ENCODE measurements at regions of chr3 and their contacts with region 1.

Region 1: GRCh38 chr3:124928333-124929202 is 6.0 kb downstream of the MUC13 start:
- DNase-seq: peak; percentile 57
- ATAC-seq: peak; percentile 63; the same call in 2 of the 3 replicates
- H3K4me3 ChIP-seq: no peak overlapping the region
- H3K27ac ChIP-seq: no peak overlapping the region
- H3K4me1 ChIP-seq: peaks cover 22% of the 10 kb centered on the region
- H3K27me3 ChIP-seq: no peaks in the 10 kb centered on the region
- CTCF ChIP-seq: peak; percentile 74
- EP300 ChIP-seq: no peak
- POLR2A ChIP-seq: no peak
- RAD21 ChIP-seq: 0 out of 2 replicates have a peak, but pooled peaks have one; percentile 40

Region 2: GRCh38 chr3:124916837-124917409 is 11.6 kb before region 1 on chr3:
- CTCF ChIA-PET with region 1: no interaction called
- POLR2A ChIA-PET with region 1: no interaction called
- in situ Hi-C with region 1: no loop called
- intact Hi-C with region 1: no loop called
- DNase-seq: no peak
- ATAC-seq: no peak
- H3K4me3 ChIP-seq: no peak overlapping the region
- H3K27ac ChIP-seq: no peak overlapping the region
- H3K4me1 ChIP-seq: peaks cover 9% of the 10 kb centered on the region
- H3K27me3 ChIP-seq: peaks cover 0 to 7% of the 10 kb centered on the region in 2 experiments; a peak in 1 of 5 replicates
- CTCF ChIP-seq: no peak
- EP300 ChIP-seq: no peak
- POLR2A ChIP-seq: no peak
- RAD21 ChIP-seq: no peak

Region 3: DNA sequence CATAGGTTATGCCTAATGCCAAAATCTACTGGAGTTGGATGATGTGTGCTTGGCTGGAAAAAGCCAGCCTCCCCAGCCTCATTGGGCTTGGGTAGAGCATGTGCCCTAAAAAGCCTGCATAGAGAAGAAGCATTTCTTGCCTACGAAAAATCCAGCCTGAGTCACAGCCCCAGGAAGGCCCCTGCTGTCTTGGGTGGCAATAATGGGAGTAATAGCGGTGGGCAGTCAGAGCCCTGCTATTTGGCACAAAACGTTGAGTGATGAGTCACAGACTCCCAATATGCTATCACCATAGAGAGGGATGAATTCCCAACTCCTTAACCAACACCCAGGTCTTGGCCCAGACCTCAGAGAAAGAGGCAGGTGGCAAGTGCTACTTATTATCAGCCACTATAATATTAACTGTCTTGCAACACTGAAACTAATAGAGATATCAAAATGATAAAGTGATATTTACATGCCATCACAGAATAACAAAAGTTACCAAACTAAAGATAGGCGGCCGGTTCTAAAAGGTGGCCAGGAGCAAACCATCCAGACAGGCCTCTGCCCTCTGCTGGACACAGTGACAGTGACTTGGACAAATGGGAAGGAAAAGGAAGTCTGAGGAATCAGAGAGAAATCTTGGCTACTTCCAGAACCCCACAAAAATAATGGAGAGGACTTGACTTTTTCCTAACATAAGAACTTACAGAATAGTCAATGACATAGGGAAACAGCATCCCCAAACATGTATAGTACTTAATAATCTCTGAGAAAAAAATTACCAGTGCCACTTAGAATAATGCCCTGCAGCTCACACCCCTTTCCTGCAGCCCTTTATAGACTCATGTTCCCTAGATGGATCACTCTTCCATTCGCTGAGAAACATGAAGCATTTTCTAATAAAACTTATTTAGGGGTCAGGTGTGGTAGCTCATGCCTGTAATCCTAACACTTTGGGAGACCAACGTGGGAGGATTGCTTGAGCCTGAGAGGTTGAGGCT is 57.9 kb after region 1 on chr3:
- CTCF ChIA-PET with region 1: interaction called, 9 read pairs
- POLR2A ChIA-PET with region 1: no interaction called
- in situ Hi-C with region 1: no loop called
- intact Hi-C with region 1: loop called (anchors 2 kb)
- DNase-seq: no peak
- ATAC-seq: peak; percentile 68
- H3K4me3 ChIP-seq: no peak overlapping the region
- H3K27ac ChIP-seq: no peak overlapping the region
- H3K4me1 ChIP-seq: peaks cover under 1% of the 10 kb centered on the region; the same call in 1 of the 2 replicates
- H3K27me3 ChIP-seq: no peaks in the 10 kb centered on the region
- CTCF ChIP-seq: peak; percentile 53
- EP300 ChIP-seq: no peak
- POLR2A ChIP-seq: no peak
- RAD21 ChIP-seq: peak; percentile 24; the same call in 1 of the 2 replicates

Region 4: GRCh38 chr3:125129512-125129962 is 201.0 kb after region 1 on chr3:
- CTCF ChIA-PET with region 1: no interaction called
- POLR2A ChIA-PET with region 1: no interaction called
- in situ Hi-C with region 1: no loop called
- intact Hi-C with region 1: no loop called
- DNase-seq: peak; percentile 59
- ATAC-seq: peak; percentile 66
- H3K4me3 ChIP-seq: no peak overlapping the region
- H3K27ac ChIP-seq: no peak overlapping the region
- H3K4me1 ChIP-seq: peaks cover 32% of the 10 kb centered on the region
- H3K27me3 ChIP-seq: peaks cover 2 to 10% of the 10 kb centered on the region in 2 experiments; a peak in 3 of 5 replicates
- CTCF ChIP-seq: no peak
- EP300 ChIP-seq: no peak
- POLR2A ChIP-seq: no peak
- RAD21 ChIP-seq: no peak

Region 5: DNA sequence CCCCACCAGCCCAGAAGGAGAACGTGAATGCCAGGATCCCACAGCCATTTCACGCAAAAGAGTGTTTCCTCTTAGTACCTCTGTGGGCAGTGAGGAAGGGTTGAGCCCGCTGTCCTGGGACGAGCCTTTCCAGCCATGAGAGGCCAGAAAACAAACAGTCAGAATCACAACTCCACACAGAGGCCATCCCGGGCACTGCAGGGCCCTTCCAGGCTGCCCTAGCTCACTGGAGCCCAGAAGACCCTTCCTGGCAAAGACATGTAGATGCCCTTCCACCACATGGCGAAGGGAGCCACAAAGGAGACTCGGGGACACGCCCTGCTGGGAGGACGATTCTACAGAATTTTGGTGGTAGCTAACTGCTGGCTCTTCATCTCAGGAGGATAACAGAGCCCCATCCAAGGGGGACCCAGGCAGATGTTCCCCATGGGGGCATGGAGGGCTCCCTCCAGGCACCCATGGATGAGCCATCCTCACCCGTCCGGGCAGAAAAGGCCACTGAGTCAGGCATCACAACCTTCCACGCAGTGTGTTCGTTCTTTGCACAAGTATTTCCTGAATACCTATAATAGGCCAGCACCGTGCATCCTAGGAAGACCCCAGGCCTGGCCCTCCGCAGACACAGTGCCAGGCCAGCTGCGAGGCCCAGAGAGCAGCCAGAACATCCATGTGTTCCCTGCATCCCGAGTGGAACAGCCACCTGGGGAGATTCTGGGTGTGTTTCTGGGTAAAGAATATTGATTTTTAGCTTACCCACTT is 236.8 kb after region 1 on chr3:
- CTCF ChIA-PET with region 1: interaction called, 9 read pairs
- POLR2A ChIA-PET with region 1: no interaction called
- in situ Hi-C with region 1: loop called (anchors 5 kb)
- intact Hi-C with region 1: loop called (anchors 2 kb)
- DNase-seq: peak; percentile 34
- ATAC-seq: peak; percentile 94
- H3K4me3 ChIP-seq: no peak overlapping the region
- H3K27ac ChIP-seq: no peak overlapping the region
- H3K4me1 ChIP-seq: no peaks in the 10 kb centered on the region
- H3K27me3 ChIP-seq: peaks cover 0 to 13% of the 10 kb centered on the region in 2 experiments; a peak in 2 of 5 replicates
- CTCF ChIP-seq: peak; percentile 77
- EP300 ChIP-seq: no peak
- POLR2A ChIP-seq: no peak
- RAD21 ChIP-seq: peak; percentile 64; the same call in 1 of the 2 replicates

Region 6: DNA sequence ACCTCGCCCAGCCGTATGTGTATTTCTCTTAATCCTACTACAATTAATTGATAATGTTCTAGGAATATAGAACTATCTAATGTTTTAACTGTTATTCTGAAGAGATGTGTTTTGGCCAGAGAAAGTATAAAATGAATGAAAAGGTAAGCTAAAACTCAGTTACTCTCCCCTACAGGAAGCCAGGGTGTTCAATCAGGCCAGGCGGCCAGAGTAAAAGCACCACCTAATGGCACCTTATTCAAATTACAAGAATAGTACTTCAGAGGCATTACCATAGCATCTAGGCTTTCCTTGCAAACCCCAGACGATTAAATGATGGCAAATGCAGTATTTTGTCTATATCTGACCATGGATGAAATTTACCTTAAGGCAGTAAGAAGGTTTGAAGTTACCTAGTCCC is 273.6 kb after region 1 on chr3:
- CTCF ChIA-PET with region 1: interaction called, 6 read pairs
- POLR2A ChIA-PET with region 1: no interaction called
- in situ Hi-C with region 1: no loop called
- intact Hi-C with region 1: loop called (anchors 5 kb)
- DNase-seq: no peak
- ATAC-seq: peak; percentile 84
- H3K4me3 ChIP-seq: no peak overlapping the region
- H3K27ac ChIP-seq: no peak overlapping the region
- H3K4me1 ChIP-seq: peaks cover 22% of the 10 kb centered on the region
- H3K27me3 ChIP-seq: no peaks in the 10 kb centered on the region
- CTCF ChIP-seq: peak; percentile 70
- EP300 ChIP-seq: no peak
- POLR2A ChIP-seq: no peak
- RAD21 ChIP-seq: 0 out of 2 replicates have a peak, but pooled peaks have one; percentile 10

Region 7: GRCh38 chr3:125585595-125586223 is 657.1 kb after region 1 on chr3:
- CTCF ChIA-PET with region 1: interaction called, 4 read pairs
- POLR2A ChIA-PET with region 1: no interaction called
- in situ Hi-C with region 1: no loop called
- intact Hi-C with region 1: loop called (anchors 10 kb)
- DNase-seq: peak; percentile 56
- ATAC-seq: peak; percentile 76
- H3K4me3 ChIP-seq: no peak overlapping the region
- H3K27ac ChIP-seq: no peak overlapping the region
- H3K4me1 ChIP-seq: peaks cover 10% of the 10 kb centered on the region; the same call in 1 of the 2 replicates
- H3K27me3 ChIP-seq: no peaks in the 10 kb centered on the region
- CTCF ChIP-seq: peak; percentile 87
- EP300 ChIP-seq: no peak
- POLR2A ChIP-seq: no peak
- RAD21 ChIP-seq: peak; percentile 57; the same call in 1 of the 2 replicates